ENCODE measurements at regions of chr2 and their contacts with region 1.

Region 1: DNA sequence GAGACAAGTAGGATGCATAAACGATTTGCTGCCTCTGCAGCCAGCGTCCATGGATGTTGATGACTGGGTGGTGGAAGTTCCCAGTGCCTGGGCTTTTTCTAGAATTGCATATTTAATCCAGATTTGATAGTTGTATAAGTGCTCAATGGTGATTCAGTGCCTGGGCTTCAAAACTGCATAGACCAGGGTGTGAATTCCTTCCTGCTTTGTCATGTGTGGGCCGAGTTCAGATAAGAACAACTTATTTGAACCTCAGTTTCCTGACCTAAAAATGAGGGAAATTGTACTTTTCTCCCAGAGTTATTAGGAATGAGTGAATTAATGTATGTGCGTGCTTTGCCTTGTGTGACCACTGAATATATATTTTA is 154.6 kb downstream of the WDSUB1 start:
- DNase-seq: no peak
- H3K4me3 ChIP-seq: no peak overlapping the region
- H3K27ac ChIP-seq: no peak overlapping the region
- H3K4me1 ChIP-seq: peaks cover 0 to 3% of the 10 kb centered on the region in 2 donors
- H3K27me3 ChIP-seq: no peaks in the 10 kb centered on the region
- CTCF ChIP-seq: no peak
- POLR2A ChIP-seq: no peak

Region 2: DNA sequence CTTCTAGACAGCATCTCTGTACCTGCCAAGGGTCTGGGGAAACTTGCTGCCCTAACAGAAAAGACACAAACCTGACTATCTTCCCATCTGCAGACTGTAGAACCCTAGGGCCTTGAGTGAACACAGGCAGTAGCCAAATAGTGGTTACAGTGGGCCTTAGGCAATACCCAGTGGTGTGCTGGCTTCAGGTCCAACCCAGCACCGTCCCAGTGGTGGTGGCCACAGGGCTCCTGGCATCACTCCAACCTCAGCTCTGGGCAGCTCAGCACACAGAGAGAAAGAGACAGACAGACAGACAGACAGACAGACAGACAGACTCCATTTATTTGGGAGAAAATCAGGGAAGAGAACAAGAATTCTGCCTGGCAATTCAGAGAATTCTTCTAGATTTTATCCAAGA is 1059.5 kb before region 1 on chr2:
- intact Hi-C with region 1: no loop called
- DNase-seq: no peak
- H3K4me3 ChIP-seq: no peak overlapping the region
- H3K27ac ChIP-seq: no peak overlapping the region
- H3K4me1 ChIP-seq: no peaks in the 10 kb centered on the region
- H3K27me3 ChIP-seq: no peaks in the 10 kb centered on the region
- CTCF ChIP-seq: no peak
- POLR2A ChIP-seq: no peak

Region 3: GRCh38 chr2:158936978-158937377 is 194.9 kb before region 1 on chr2:
- intact Hi-C with region 1: no loop called
- DNase-seq: no peak
- H3K4me3 ChIP-seq: no peak overlapping the region
- H3K27ac ChIP-seq: no peak overlapping the region
- H3K4me1 ChIP-seq: no peaks in the 10 kb centered on the region
- H3K27me3 ChIP-seq: no peaks in the 10 kb centered on the region
- CTCF ChIP-seq: no peak
- POLR2A ChIP-seq: no peak

Region 4: DNA sequence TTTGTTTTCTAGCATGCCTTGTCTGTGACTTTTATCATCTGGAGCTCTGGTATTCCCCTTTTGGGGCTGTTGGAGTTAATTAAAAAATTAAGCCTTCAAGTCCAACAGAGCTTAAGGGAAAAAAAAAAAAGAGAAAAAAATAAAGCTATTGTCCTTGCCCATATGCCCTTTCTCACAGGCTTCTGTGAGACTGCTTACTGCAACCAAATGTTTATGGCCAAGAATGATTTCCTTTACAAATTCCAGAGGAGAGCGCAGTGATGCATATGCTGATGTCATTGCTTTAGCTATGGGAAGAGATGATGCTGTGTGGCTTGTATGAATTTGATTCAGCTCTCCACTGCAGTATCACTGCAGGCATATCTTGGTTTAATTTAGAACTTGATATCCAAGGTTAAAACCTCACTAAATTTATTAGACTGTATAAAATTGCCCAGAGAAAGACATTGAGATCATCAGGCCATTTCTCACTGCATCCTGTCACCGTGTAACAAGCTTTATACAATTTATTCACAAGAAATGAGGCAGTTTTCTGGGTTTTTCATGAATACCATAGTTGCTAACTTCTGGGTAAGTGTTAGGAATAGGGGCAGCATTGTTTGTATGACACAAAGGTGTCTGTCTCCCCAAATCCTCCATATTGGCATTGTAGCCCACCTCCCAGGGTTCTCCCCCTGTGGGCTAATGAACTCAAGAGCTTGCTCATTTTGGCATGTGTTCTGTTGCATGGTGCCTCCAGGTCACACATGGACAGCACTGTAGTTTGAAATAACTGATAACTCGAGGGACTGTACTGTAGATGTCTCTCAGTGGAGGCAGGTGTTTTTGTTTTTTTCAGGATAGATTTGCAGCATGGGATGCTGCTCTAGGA is 78.5 kb before region 1 on chr2:
- intact Hi-C with region 1: loop called (anchors 2 kb)
- DNase-seq: no peak
- H3K4me3 ChIP-seq: no peak overlapping the region
- H3K27ac ChIP-seq: no peak overlapping the region
- H3K4me1 ChIP-seq: no peaks in the 10 kb centered on the region
- H3K27me3 ChIP-seq: no peaks in the 10 kb centered on the region
- CTCF ChIP-seq: no peak
- POLR2A ChIP-seq: no peak

Region 5: DNA sequence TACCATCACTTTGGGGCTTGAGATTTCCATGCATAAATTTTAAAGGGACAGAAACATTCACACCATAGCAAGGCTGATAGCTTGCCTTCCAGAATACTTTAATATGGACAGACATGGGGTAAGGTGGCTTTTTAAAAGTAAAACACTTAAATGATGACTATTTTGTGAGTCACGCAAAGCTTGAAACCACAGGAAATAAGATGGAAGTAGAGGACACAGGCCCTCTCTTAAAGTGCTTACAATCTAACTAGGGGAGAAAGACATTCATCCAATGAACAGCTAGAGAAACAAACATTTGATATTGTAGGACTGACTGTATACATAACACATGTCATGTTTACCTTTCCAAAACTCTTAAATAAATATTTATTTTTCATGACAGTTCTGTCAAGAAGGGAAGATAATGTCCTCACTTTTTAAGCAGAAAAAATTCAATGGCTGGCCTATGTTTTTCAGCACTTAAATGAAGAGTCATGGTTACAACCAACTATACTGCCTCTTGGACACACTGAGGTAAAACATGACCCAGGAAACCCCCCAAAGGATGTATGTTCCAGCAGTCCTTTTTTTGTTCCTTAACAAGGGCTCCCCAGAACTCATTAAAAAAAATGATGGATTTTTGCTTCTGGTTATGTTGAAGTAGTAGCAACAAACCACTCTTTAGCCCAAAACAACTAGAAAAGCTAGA is 1481.7 kb after region 1 on chr2:
- intact Hi-C with region 1: no loop called
- DNase-seq: no peak
- H3K4me3 ChIP-seq: no peak overlapping the region
- H3K27ac ChIP-seq: no peak overlapping the region
- H3K4me1 ChIP-seq: no peaks in the 10 kb centered on the region
- H3K27me3 ChIP-seq: no peaks in the 10 kb centered on the region
- CTCF ChIP-seq: no peak
- POLR2A ChIP-seq: no peak

Measured in breast epithelium (tissue), 4 donors.